Ascending aorta (tissue), 2 donors: ENCODE measurements at regions of chr3 and their contacts with region 1.

Region 1: GRCh38 chr3:71191031-71191482 is 392.5 kb downstream of the FOXP1 start:
- DNase-seq: no peak
- H3K4me3 ChIP-seq: no peak overlapping the region
- H3K27ac ChIP-seq: no peak overlapping the region
- H3K4me1 ChIP-seq: peaks cover 0 to 2% of the 10 kb centered on the region in 2 donors
- H3K27me3 ChIP-seq: no peaks in the 10 kb centered on the region
- CTCF ChIP-seq: no peak

Region 2: DNA sequence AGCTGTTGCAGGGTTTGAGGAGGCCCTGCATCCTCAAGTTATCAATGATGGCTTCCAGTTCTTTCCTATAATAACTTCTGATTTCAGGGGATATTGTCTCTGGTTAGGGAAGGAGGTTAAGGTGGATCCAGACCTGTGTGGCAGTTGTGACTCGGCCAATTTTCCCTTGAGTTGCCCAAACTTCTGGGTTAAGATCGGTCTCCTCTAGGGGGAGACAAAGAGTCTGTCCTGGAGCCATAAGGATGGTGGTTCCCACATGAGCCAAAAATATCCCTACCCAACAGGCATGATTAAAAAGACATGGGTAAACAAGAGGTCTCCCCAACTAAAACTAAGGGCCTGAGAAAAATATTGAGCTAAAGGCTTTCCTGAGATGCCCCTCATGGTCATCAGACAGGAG is 651.1 kb before region 1 on chr3:
- intact Hi-C with region 1: loop called (anchors 5 kb)
- DNase-seq: no peak
- H3K4me3 ChIP-seq: no peak overlapping the region
- H3K27ac ChIP-seq: no peak overlapping the region
- H3K4me1 ChIP-seq: no peaks in the 10 kb centered on the region
- H3K27me3 ChIP-seq: no peaks in the 10 kb centered on the region
- CTCF ChIP-seq: no peak

Region 3: DNA sequence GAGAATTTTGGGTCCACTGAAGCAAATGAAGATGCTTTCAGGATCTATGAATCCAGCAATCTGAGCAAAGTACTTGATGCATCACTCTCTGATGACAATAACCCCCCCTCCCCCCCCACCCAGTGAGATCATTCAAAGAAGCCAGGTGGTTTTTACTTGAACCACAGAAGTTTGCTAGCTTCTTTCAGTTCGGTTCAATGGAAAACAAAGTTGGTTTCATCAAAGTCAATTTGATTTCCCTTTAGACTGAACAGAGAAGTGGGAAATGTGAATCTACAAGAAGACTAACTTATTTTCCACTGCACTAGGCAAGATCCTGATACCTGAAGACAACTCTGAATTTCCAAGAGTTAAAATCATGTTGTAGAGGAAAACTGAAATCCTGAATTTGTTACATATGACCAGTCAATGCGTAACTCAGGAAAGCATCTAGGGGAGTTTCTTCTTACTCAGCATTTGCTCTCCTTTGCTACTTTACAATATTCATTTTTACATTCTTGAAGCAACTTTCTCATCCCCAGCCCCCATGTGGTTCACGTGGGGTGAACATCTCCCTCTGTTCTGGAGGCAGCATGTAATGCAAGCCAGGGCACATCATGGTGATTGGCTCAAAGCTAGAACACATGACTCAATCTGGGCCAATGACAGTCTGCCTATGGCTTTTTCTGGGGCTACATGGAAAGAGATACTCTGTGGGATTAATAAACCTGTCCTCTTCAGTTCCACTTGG is 180.2 kb before region 1 on chr3:
- intact Hi-C with region 1: no loop called
- DNase-seq: no peak
- H3K4me3 ChIP-seq: no peak overlapping the region
- H3K27ac ChIP-seq: peak overlapping the region; percentile 43 to 68
- H3K4me1 ChIP-seq: peaks cover 17 to 31% of the 10 kb centered on the region in 2 donors
- H3K27me3 ChIP-seq: no peaks in the 10 kb centered on the region
- CTCF ChIP-seq: no peak